ENCODE measurements at regions of chr17 and their contacts with region 1.

Region 1: DNA sequence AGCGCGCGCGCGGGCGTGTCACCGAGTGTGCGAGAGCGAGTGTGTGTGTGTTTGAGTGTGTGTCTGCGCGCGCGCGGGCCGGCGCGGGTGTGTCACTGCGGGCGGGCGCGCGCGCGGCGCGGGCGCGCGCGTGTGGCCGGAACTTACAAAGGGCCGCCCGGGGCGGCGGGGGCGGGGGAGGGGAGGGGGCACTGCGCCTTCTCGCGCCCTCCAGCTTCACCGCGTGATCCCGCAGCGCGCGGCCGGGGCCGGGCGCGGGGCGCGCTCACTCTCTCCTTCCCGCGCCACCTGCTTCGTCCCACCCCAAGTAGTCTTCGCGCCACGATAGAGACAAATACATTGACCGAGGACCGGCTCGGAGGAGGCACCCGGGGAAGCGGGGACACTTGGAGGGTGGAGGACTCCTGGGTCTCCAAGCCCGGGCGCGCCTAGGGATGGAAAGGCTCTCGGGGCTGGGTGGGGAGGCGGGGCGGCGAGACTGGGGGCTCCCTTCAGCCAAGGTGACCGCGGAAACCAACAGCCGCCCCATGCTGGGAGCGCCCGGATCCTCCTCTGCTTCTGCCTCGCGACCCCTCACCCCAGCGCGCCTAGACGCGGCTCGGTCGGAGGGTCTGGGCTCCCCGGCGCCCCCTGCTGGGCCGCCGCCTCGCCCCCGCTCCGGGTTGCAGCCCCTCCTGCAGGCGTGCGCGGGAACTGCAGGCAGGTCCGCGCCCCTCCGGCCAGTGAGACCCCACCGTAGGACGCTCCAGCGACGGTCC is at the start of gene SRCIN1:
- DNase-seq: peak in 1 of 2 experiments; percentile 95
- H3K4me3 ChIP-seq: peak within 1 kb of the TSS; percentile 48 to 67 (median 56)
- H3K27ac ChIP-seq: peak within 1 kb of the TSS; percentile 30; the same call in 1 of the 2 replicates
- H3K4me1 ChIP-seq: peaks cover 34 to 59% (median 51%) of the 10 kb centered on the region in 4 experiments
- H3K27me3 ChIP-seq: peaks cover 2 to 29% (median 25%) of the 10 kb centered on the region in 4 experiments
- CTCF ChIP-seq: peak; percentile 94 to 100 (median 98)
- EP300 ChIP-seq: no peak
- POLR2A ChIP-seq: peak in 1 of 2 experiments; percentile 29; a peak in 1 of 3 replicates
- RAD21 ChIP-seq: peak; percentile 41 to 71
- total RNA-seq, gene SRCIN1: 3.8 and 4.1 TPM in 2 replicates

Region 2: DNA sequence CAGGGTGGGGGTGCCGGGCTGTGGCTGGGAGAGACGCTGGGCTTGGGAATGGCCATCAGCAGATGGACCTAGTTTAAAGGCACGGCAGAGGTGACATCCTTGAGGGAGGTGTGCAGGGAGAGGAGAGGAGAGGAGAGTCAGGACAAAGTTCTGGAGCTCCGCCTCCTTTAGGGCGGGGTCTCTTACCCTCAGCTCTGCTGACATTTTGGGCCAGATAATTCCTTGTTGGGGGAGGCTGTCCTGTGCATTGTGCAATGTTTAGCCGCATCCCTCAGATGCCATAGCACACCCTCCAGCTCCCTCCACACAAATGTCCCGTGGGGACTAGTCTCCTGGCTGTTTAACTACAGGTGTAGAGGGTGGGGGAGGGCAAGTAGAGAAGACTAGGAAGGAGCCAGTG is 129.5 kb before region 1 on chr17:
- CTCF ChIA-PET with region 1: no interaction called
- POLR2A ChIA-PET with region 1: no interaction called
- DNase-seq: no peak
- H3K4me3 ChIP-seq: no peak overlapping the region
- H3K27ac ChIP-seq: no peak overlapping the region; the same call in 1 of the 2 replicates
- H3K4me1 ChIP-seq: no peaks in the 10 kb centered on the region
- H3K27me3 ChIP-seq: no peaks in the 10 kb centered on the region
- CTCF ChIP-seq: no peak
- EP300 ChIP-seq: no peak
- POLR2A ChIP-seq: no peak
- RAD21 ChIP-seq: no peak

Region 3: DNA sequence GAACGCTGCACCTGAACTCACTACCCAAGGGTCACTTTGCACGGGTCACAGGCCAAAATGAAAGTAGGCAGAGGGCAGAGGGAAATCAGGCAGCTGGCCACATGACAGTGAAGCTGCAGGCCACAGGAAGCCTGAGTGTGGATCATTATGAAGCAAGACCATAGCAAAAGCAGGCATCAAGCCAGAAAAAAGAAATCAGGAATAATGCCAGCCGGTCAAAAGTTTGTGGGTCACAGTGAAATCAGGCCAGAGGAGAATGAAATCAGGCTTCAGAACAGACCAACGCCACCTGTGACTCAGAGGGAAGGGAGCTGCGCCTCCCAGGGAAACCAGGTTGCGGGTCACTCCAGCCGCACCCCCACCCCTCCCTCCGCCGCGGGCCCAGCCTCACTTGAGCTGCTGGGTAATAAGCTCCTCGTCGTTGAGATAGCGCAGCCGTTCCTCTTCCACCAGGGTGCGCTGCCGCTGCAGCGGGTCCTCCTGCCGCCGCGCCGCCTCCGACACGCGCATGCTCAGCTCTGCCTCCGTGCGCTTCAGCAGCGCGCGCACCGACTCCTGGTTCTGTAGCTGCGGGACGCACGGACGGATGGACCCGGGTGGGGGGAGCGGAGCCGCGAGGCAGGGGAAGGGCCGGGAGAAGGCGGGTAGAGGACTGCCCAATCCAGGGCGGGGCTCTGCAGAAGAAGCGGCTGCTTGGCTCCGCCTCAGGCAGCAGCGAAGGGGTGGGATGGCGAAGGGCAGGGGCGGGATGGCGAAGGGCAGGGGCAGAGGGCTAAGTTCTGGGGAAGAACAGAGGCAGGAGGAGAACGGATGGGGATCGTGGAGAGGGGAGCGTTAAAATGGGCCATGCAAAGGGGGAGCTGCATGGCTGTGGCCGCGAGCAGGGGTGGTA is 48.0 kb before region 1 on chr17:
- CTCF ChIA-PET with region 1: interaction called, 914 read pairs
- POLR2A ChIA-PET with region 1: interaction called, 45 read pairs
- DNase-seq: peak; percentile 93 to 97
- H3K4me3 ChIP-seq: peak overlapping the region; percentile 37 to 69 (median 58); a peak in 7 of 8 replicates
- H3K27ac ChIP-seq: no peak overlapping the region
- H3K4me1 ChIP-seq: peaks cover 4 to 37% (median 27%) of the 10 kb centered on the region in 4 experiments
- H3K27me3 ChIP-seq: peaks cover 34 to 52% (median 48%) of the 10 kb centered on the region in 4 experiments
- CTCF ChIP-seq: peak; percentile 95 to 97 (median 96)
- EP300 ChIP-seq: 0 out of 3 replicates have a peak, but pooled peaks of 1 of the 2 experiments have one; percentile 58
- POLR2A ChIP-seq: no peak
- RAD21 ChIP-seq: peak; percentile 75 to 85

Region 4: DNA sequence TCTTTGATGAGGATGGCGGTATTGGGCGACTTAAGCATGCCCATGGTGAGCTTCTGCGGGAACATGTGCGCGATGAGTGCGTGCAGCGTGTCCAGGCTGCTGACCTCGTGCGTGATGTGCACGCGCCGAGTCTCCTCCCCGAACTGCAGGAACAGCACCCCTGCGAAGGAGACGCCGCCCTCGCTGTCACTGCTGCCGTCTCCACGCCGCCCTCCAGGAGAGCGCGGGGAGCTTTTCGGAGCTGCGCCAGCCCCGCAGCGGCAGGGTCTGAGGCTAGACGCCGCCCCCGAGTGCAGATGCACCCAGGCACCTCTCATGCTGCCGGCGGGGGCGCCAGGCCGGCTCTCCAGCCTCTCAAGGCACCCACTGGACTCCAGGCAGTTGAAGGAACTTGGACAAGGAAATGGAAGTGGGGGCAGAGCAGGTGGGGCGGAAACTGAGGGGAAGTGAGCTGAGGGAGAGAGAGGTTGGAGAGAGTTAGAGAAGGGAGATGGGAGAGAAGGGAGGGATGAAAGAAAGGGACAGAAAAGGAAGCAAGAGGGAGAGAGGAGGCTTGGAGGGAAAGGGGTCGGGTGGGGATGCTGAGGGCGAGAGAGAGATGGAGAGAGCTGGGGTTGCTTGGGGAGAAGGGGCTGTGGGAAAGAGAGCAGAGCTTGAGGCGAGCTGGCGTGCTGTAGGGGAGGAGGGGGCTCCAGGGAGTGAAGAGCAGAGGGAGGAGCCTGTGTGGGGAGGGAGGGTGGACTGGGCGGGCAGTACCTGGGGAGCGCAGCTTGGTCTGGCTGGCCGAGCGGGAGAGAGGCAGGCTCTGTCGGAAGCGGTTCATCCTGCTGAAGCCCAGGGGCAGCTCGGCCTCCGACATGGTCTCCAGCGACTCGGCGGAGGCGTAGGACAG is 42.5 kb before region 1 on chr17:
- CTCF ChIA-PET with region 1: interaction called, 914 read pairs
- POLR2A ChIA-PET with region 1: interaction called, 45 read pairs
- DNase-seq: peak; percentile 75 to 83
- H3K4me3 ChIP-seq: peak overlapping the region; percentile 28 to 60 (median 48)
- H3K27ac ChIP-seq: no peak overlapping the region
- H3K4me1 ChIP-seq: peaks cover 8 to 50% (median 38%) of the 10 kb centered on the region in 4 experiments
- H3K27me3 ChIP-seq: peaks cover 65 to 95% (median 91%) of the 10 kb centered on the region in 4 experiments
- CTCF ChIP-seq: no peak
- EP300 ChIP-seq: no peak
- POLR2A ChIP-seq: no peak
- RAD21 ChIP-seq: peak in 1 of 2 experiments; percentile 0; a peak in 1 of 4 replicates

Region 5: DNA sequence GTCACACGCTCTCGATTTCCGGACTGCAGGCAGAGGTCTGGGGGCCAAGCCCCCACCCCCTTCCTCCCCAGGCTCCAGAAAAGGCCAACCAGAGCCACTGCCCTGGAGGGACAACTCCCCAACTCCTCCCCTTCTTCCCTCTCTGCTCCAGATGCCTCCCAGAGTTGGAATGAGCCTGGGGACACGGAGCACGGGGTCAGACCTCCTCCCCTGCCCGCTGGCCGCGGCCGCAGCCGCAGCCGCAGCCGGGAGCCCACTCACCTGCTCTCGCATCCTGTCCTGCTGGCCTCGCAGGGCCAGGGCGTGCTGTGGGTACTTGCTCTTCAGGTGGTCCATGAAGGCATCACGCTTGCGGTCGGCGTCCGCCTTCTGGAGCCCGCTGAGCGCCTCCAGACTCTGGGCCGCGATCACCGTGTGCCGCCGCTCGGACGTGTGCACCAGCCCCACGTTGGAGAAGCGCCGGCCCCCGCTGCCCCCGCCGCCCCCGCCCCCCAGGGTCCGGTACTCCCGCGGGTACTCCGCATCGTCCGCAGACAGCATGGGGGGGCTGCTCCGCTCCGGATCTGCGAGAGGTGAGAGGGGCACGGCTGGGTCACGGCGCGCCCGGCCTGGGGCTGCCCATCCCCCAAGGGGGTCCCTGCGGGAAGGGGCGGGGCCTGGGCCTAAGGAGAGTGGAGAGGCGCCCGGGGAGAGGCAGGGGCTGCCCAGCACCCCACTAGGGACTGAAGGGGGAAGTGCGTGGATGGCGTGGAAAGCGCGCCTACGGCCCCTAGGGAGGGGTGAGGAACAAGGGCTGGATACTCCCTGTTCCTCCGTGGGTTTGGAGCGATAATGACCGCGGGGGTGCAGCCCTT is 27.6 kb before region 1 on chr17:
- CTCF ChIA-PET with region 1: interaction called, 403 read pairs
- POLR2A ChIA-PET with region 1: interaction called, 5 read pairs
- DNase-seq: no peak
- H3K4me3 ChIP-seq: peak overlapping the region; percentile 14 to 58 (median 41)
- H3K27ac ChIP-seq: no peak overlapping the region
- H3K4me1 ChIP-seq: peaks cover 7 to 26% (median 13%) of the 10 kb centered on the region in 4 experiments
- H3K27me3 ChIP-seq: peaks cover 49 to 77% (median 70%) of the 10 kb centered on the region in 4 experiments
- CTCF ChIP-seq: no peak
- EP300 ChIP-seq: no peak
- POLR2A ChIP-seq: no peak
- RAD21 ChIP-seq: no peak

Region 6: GRCh38 chr17:38584350-38584925 is 21.6 kb before region 1 on chr17:
- CTCF ChIA-PET with region 1: interaction called, 403 read pairs
- POLR2A ChIA-PET with region 1: interaction called, 28 read pairs
- DNase-seq: peak in 1 of 2 experiments; percentile 89
- H3K4me3 ChIP-seq: peak overlapping the region in 1 of 4 experiments; percentile 34; a peak in 2 of 8 replicates
- H3K27ac ChIP-seq: no peak overlapping the region
- H3K4me1 ChIP-seq: peaks cover 3 to 45% (median 26%) of the 10 kb centered on the region in 4 experiments
- H3K27me3 ChIP-seq: peaks cover 4 to 18% (median 13%) of the 10 kb centered on the region in 4 experiments
- CTCF ChIP-seq: peak; percentile 88 to 94 (median 92)
- EP300 ChIP-seq: no peak
- POLR2A ChIP-seq: no peak
- RAD21 ChIP-seq: peak; percentile 68 to 78

Region 7: DNA sequence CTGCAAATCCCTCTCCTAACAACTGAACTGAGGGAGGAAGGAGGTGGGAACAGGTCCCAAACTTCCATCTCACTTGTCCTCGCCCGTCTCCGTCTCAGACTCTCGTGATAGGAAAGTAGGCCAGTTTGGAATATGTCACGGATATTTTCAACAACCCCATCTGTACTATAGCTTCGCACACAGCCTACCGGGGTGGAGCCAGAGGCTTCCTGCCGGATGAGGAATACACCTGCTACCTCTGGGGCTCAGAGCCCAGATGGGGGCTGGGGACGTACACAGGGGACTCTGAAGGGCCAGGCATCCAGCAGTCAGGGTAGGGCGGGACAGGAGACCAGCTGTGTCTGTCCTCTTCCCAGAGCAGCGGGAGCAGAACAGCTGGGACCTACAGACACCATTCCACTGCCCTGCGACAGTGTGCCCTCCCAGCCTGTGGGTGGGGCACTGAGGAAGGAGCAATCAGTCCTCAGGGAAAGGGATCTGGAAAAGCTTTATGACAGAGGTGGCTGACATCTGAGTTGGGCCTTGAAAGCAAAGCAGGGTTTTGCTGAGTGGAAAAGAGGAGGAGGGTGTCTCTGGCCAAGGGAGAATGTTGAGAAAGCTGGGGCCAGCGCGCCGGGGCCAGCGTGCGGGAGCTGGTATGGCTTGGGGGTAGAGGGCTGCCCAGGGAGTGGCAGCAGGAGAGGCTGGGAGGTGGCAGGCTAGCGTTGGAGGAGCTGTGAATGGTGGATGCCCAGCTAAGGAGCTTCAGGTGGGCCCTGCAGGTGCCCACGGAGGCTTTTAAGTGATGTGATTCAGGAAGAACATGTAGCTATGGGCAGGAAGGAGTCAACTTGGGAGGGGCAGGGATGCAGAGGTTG is 11.2 kb after region 1 on chr17:
- CTCF ChIA-PET with region 1: interaction called, 10 read pairs
- POLR2A ChIA-PET with region 1: interaction called, 19 read pairs
- DNase-seq: no peak
- H3K4me3 ChIP-seq: no peak overlapping the region
- H3K27ac ChIP-seq: no peak overlapping the region
- H3K4me1 ChIP-seq: peaks cover 6 to 18% (median 10%) of the 10 kb centered on the region in 4 experiments
- H3K27me3 ChIP-seq: no peaks in the 10 kb centered on the region
- CTCF ChIP-seq: no peak
- EP300 ChIP-seq: no peak
- POLR2A ChIP-seq: no peak
- RAD21 ChIP-seq: no peak